H1 (cell line): ENCODE measurements at regions of chr6 and their contacts with region 1.

Region 1: GRCh38 chr6:55198708-55199107 is 24.4 kb downstream of the HCRTR2 start:
- DNase-seq: no peak
- H3K4me3 ChIP-seq: no peak overlapping the region
- H3K27ac ChIP-seq: no peak overlapping the region
- H3K4me1 ChIP-seq: no peaks in the 10 kb centered on the region
- H3K27me3 ChIP-seq: no peaks in the 10 kb centered on the region
- CTCF ChIP-seq: no peak
- EP300 ChIP-seq: no peak
- POLR2A ChIP-seq: no peak
- RAD21 ChIP-seq: no peak

Region 2: GRCh38 chr6:54907355-54907754 is 291.4 kb before region 1 on chr6:
- CTCF ChIA-PET with region 1: no interaction called
- POLR2A ChIA-PET with region 1: no interaction called
- DNase-seq: no peak
- H3K4me3 ChIP-seq: no peak overlapping the region
- H3K27ac ChIP-seq: no peak overlapping the region
- H3K4me1 ChIP-seq: no peaks in the 10 kb centered on the region
- H3K27me3 ChIP-seq: no peaks in the 10 kb centered on the region
- CTCF ChIP-seq: no peak
- EP300 ChIP-seq: no peak
- POLR2A ChIP-seq: no peak
- RAD21 ChIP-seq: no peak

Region 3: DNA sequence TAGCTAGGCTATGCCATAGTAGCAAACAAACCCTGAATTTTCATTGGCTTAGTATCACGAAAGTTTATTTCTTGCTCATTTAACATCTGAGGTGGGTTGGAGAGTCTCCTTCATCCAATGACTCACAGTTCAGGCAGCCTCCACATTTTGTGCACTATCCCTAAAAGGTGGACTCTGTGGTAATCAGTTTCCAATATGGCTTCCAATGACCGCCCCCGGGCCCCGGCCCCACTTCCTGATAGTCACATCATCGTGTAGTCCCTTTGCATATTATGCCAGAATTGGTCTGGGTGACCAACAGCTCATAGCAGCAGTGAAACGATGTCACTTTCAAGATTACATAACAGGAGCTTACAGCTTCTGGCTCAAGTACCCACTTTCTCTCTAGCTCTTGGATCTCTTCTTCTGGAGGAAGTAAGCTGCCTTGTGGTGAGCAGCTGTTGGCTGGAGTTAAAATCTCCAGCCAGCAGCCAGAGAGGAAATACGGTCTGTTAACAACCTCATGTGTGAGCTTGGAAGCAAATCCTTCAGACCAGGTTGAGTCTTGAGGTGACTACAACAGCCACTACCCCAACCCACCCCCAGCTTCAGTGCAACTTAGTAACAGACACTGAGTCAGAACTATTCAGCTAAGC is 16.6 kb before region 1 on chr6:
- CTCF ChIA-PET with region 1: interaction called, 10 read pairs
- POLR2A ChIA-PET with region 1: no interaction called
- DNase-seq: no peak
- H3K4me3 ChIP-seq: no peak overlapping the region
- H3K27ac ChIP-seq: no peak overlapping the region
- H3K4me1 ChIP-seq: no peaks in the 10 kb centered on the region
- H3K27me3 ChIP-seq: no peaks in the 10 kb centered on the region
- CTCF ChIP-seq: no peak
- EP300 ChIP-seq: no peak
- POLR2A ChIP-seq: no peak
- RAD21 ChIP-seq: no peak

Region 4: DNA sequence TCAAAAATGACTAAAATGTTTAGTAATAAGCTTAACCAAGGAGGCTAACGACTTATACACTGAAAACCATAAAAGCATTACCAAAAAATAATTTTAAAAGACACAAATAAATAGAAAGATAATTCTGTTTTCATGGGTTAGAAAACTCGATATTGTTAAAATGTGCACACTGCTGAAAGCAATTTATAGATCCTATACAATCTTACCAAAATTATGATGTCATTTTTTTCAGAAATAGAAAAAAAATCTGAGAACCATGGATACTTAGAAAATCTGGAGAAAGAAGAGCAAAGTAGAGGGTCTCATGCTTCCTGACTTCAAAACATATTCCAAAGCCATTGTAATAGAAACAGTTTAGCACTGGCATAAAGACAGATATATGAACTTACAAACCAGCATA is 22.2 kb after region 1 on chr6:
- CTCF ChIA-PET with region 1: no interaction called
- POLR2A ChIA-PET with region 1: no interaction called
- DNase-seq: no peak
- H3K4me3 ChIP-seq: no peak overlapping the region
- H3K27ac ChIP-seq: no peak overlapping the region
- H3K4me1 ChIP-seq: no peaks in the 10 kb centered on the region
- H3K27me3 ChIP-seq: no peaks in the 10 kb centered on the region
- CTCF ChIP-seq: no peak
- EP300 ChIP-seq: no peak
- POLR2A ChIP-seq: no peak
- RAD21 ChIP-seq: no peak